ENCODE measurements at regions of chr3 and their contacts with region 1.

Region 1: GRCh38 chr3:175495331-175495730 is 636.2 kb downstream of the NAALADL2 start:
- DNase-seq: no peak
- H3K4me3 Mint-ChIP-seq: no peak overlapping the region
- H3K27ac Mint-ChIP-seq: peak overlapping the region; percentile 8
- H3K4me1 Mint-ChIP-seq: peaks cover 51% of the 10 kb centered on the region
- H3K27me3 Mint-ChIP-seq: no peaks in the 10 kb centered on the region
- CTCF ChIP-seq: no peak

Region 2: DNA sequence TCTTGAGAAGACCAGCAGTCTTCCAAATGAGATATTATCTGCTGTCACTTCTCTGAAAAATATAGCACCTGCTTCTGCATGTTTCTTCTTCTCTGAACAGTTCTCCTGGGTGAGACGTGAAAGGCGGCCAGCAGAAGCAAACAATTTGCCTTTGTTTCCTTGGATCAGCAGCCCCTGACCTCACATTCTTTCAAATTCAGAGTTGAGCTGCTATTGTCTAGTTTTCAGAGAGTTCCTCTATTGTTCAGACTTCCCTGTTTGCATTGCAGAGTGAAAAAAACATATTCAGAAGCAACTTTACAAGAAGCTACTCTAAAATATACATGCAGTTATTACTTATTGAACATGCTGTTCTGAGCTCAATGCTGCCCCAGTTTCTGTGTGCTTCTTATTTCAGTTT is 17.4 kb after region 1 on chr3:
- CTCF ChIA-PET with region 1: no interaction called
- intact Hi-C with region 1: loop called (anchors 1 kb)
- DNase-seq: peak; percentile 27
- H3K4me3 Mint-ChIP-seq: no peak overlapping the region
- H3K27ac Mint-ChIP-seq: peak overlapping the region; percentile 7
- H3K4me1 Mint-ChIP-seq: peaks cover 19% of the 10 kb centered on the region
- H3K27me3 Mint-ChIP-seq: no peaks in the 10 kb centered on the region
- CTCF ChIP-seq: no peak

Region 3: DNA sequence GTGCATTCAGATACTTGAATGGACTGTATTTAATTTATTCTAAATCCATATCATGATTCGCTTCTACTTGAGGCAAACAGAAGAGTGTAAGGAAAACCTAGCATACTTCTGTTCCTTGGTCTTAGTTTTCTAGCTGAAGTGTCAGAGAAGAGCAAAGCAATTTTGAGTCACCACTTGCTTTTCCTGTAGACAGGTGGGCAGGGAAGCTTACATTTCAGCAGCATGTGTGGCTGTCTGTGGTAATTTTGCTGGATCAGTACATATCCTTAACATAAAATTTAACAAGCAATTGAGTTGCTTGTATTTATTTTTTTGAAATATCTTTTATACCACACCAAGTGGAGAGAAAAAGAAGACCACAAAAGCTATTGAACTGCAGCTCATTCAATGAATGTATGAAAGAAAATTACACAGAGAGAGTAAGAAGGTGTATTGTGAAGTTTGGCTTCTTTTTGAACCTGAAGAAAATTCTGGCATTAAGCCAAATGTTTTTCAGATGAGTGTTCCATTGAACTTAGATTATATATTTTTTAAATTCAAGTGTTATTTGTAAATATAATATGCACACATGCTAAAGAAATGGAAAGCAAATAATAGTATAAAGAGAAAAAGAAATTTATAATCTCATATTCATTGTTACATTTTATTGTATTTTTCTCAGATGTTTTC is 111.5 kb after region 1 on chr3:
- CTCF ChIA-PET with region 1: interaction called, 4 read pairs
- intact Hi-C with region 1: loop called (anchors 5 kb)
- DNase-seq: no peak
- H3K4me3 Mint-ChIP-seq: no peak overlapping the region
- H3K27ac Mint-ChIP-seq: peak overlapping the region; percentile 87
- H3K4me1 Mint-ChIP-seq: peaks cover 69% of the 10 kb centered on the region
- H3K27me3 Mint-ChIP-seq: no peaks in the 10 kb centered on the region
- CTCF ChIP-seq: no peak